OCI-LY7 (cell line): ENCODE measurements at regions of chr2 and their contacts with region 1.

Region 1: DNA sequence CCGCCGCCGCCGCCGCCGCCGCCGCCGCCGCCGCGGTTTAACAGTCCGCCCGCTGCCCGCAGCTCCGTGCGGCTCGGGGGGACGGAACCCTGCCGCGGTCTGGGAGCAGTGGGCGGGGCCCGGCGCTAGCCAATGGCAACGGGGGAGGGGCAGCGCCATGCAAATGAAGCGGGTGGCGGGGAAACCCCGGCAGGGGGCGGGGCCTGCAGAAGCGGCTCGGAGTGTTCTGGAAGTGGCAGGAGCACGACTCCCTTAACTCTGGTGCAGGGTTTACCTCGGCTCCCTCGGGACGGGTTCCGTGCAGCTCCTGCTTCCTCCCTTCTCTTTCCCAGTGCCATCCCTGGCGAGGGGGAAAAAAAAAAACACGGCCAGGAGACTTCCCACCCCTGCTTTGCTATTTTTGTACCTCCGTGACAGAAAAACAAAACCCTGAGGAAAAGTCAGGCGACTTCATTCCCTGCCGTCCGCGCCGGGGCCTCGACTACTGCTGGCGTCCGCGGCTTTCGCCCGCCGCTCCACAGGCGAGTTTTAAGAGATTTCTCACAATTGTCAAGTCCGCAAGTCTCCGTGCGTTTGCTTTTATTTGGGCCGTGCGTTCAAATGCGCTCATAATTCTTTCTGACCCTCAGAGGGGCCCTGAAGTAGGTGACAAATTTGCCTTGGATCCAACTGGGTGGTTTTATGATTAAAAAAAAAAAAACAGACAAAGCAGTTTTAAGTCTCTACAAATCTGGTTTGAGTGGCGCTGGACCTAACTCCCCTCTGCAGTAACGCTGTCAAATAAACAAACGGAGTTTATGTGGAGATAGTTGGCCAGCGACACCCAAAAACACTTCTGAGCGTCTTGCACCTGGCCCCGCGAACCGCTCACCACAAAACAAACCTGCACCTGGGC is at the start of gene KANSL1L:
- DNase-seq: peak; percentile 97
- H3K4me3 ChIP-seq: peak within 1 kb of the TSS; percentile 98
- H3K27ac ChIP-seq: peak within 1 kb of the TSS; percentile 90
- H3K4me1 ChIP-seq: peaks cover 34% of the 10 kb centered on the region
- CTCF ChIP-seq: 0 out of 2 replicates have a peak, but pooled peaks have one; percentile 15
- total RNA-seq, gene KANSL1L: 22.8 and 22.9 TPM in 2 replicates

Region 2: GRCh38 chr2:208265801-208266552 is 1905.6 kb before region 1 on chr2 and contains the start of gene PIKFYVE:
- CTCF ChIA-PET with region 1: no interaction called
- POLR2A ChIA-PET with region 1: interaction called, 3 read pairs
- intact Hi-C with region 1: loop called (anchors 5 kb)
- DNase-seq: peak; percentile 98
- H3K4me3 ChIP-seq: peak within 1 kb of the TSS; percentile 74
- H3K27ac ChIP-seq: peak within 1 kb of the TSS; percentile 93
- H3K4me1 ChIP-seq: peaks cover 37% of the 10 kb centered on the region
- CTCF ChIP-seq: no peak
- total RNA-seq, gene PIKFYVE: 29.2 and 29.7 TPM in 2 replicates

Region 3: DNA sequence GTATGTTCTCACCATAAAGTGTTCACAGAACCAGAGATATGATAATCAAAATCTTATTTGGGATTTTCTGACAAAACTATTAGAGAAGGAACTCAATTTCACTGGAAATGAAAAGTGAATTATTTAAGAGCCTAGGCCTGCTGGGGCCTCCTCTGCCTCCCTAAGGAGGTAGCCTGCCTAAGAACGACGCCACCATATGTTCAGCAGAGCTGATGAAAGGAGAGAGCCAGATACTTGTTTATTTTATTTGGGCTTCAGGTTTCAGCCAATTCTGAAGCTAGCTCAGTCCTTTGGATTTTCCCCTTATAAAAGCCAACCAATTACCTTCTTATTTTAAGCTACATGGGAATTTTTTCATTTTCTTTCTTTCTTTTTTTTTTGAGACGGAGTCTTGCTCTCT is 1180.8 kb before region 1 on chr2:
- CTCF ChIA-PET with region 1: no interaction called
- POLR2A ChIA-PET with region 1: no interaction called
- intact Hi-C with region 1: no loop called
- DNase-seq: no peak
- H3K4me3 ChIP-seq: no peak overlapping the region
- H3K27ac ChIP-seq: no peak overlapping the region
- H3K4me1 ChIP-seq: no peaks in the 10 kb centered on the region
- CTCF ChIP-seq: no peak

Region 4: DNA sequence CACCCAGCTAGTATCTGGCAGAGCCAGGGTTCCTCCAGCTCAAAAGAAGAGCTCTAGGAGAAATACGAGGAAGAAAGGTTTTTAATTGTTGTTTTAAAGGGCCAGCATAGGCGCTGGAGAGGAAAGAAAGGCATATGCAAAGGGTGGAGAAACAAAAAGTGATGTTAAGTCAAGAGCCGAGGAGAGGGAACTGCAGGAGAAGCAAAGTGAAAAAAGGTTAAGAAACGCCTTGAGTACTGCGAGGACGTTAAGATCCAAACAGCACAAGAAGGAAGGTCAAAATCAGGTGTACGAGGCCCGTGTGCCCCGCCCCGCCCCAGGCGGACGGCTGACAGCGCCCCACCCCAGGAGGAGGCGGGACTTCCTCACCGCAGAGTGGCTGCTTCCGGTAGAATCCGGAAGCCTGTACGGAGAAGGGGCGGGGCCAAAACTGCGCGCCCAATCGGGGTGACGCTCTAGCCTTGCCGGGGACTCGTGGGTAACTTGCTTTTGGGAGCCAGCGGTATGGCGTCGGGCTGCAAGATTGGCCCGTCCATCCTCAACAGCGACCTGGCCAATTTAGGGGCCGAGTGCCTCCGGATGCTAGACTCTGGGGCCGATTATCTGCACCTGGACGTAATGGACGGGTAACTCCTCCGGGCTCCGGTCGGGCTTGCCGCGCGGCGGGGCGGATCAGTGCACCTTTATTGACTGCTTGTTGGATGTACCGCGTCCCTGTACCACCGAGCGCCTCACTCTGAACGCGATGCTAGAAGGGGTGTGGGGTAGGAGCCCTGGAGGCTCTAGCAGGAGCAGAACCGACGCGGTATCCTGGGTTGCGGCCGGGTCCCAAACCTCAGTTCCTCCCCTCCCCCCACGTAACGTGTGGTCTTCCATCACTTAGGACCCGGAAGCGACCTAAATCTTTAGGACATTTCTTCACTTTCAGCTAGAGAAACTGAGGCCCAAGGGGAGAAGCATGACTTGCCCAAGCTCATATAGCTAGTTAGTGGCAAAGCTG is 169.1 kb before region 1 on chr2 and contains the start of gene RPE:
- CTCF ChIA-PET with region 1: no interaction called
- POLR2A ChIA-PET with region 1: interaction called, 5 read pairs
- intact Hi-C with region 1: loop called (anchors 1 kb)
- DNase-seq: peak; percentile 97
- H3K4me3 ChIP-seq: peak within 1 kb of the TSS; percentile 89
- H3K27ac ChIP-seq: peak within 1 kb of the TSS; percentile 58
- H3K4me1 ChIP-seq: peaks cover 38% of the 10 kb centered on the region
- CTCF ChIP-seq: no peak
- total RNA-seq, gene RPE: 63.5 and 75.1 TPM in 2 replicates

Region 5: DNA sequence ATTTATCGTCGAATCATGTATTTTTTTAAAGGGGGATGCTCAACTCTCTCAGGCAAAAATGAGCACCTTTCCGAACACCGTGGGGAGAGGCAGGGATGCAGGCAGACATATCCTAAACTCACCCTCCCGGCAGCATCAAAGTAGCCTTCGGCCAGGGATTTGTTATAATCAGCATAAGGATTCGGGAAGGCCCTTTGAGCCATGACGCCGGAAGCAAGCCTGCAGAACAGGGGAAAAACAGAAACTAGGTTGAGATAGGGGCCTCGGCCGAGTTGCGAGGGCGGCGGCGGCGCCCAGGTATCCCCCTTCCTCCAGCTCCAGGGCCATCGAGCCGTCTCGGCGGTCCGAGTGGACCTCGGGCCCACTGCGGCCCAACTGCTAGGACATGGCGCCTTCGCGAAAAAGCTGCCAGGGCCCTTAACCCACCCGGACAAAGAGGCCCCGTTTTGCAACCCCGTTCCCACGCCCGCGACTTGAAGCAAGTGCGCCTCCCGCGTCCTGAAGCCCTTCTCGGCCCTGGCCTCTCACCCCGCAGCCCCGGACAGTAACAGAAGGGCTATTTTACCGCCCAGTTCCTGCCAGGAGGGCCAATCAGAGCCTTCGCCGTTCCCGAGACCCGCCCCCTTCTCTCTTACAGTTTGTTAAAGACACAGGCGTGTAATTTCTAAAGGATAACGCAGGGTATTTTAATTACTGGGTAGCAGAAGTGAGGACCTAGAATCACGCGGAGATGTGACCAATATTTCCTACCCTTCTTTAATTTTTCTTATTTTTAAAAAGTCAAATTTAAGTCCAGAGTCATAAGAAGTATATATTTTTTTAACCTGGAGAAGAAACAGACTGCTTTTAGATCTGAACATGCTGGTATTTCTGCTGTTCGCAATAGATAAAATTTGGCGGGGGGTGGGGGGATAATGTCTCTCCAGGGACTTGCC is 304.9 kb after region 1 on chr2 and contains the start of gene LANCL1:
- CTCF ChIA-PET with region 1: no interaction called
- POLR2A ChIA-PET with region 1: no interaction called
- intact Hi-C with region 1: loop called (anchors 2 kb)
- DNase-seq: peak; percentile 90
- H3K4me3 ChIP-seq: peak within 1 kb of the TSS; percentile 85
- H3K27ac ChIP-seq: peak within 1 kb of the TSS; percentile 48
- H3K4me1 ChIP-seq: peaks cover 20% of the 10 kb centered on the region
- CTCF ChIP-seq: no peak; the same call in 1 of the 2 replicates
- total RNA-seq, gene LANCL1: 20.4 and 22.5 TPM in 2 replicates

Region 6: DNA sequence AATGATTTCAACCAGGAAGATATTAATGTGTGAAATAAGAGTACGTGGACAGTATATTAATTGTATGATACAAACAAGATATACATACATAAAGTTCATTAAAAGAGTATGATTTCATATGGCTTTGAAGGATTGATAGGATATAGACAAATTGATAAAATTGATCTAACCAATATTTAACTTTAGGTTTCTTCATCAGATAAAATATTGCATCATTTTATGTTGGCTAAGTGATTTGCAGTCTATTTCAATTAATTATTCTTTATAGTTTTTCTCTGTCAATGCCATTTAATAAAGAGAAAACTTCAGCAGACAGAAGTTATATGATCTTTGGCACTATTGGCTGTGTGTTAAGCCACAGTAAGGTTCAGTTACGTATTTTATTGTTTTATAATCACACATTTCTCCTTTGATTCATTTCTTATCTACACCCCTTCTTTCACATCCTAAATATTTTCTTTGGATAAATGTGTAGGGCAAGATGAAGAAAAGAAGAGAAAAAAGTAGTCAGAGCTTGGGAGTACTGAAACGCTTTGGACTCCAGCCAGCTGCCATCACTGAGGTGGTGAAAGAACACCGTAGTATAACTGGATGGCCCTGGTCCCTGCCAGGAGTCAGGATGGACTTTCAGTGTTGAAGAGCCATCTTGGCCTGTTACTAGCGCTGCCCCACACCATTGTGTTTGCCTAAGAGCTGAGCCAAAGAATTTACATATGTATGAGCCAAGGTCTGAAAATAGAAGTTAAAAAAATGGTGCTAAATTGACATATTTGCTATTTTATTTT is 375.1 kb after region 1 on chr2:
- CTCF ChIA-PET with region 1: no interaction called
- POLR2A ChIA-PET with region 1: no interaction called
- intact Hi-C with region 1: no loop called
- DNase-seq: no peak
- H3K4me3 ChIP-seq: no peak overlapping the region
- H3K27ac ChIP-seq: no peak overlapping the region
- H3K4me1 ChIP-seq: no peaks in the 10 kb centered on the region
- CTCF ChIP-seq: no peak

Region 7: GRCh38 chr2:210584834-210585233 is 413.3 kb after region 1 on chr2:
- CTCF ChIA-PET with region 1: no interaction called
- POLR2A ChIA-PET with region 1: no interaction called
- intact Hi-C with region 1: no loop called
- DNase-seq: no peak
- H3K4me3 ChIP-seq: no peak overlapping the region
- H3K27ac ChIP-seq: no peak overlapping the region
- H3K4me1 ChIP-seq: no peaks in the 10 kb centered on the region
- CTCF ChIP-seq: no peak